ENCODE measurements at regions of chr2 and their contacts with region 1.

Region 1: GRCh38 chr2:109128048-109128465 is 948 bp upstream of the SH3RF3 start:
- DNase-seq: peak; percentile 84 to 85
- ATAC-seq: peak; percentile 83 to 91 (median 88)
- H3K4me3 ChIP-seq: peak overlapping the region; percentile 50 to 80 (median 70)
- H3K27ac ChIP-seq: peak overlapping the region; percentile 41 to 91 (median 78)
- H3K4me1 ChIP-seq: peaks cover 0 to 50% (median 21%) of the 10 kb centered on the region in 9 donors
- H3K27me3 ChIP-seq: peaks cover 0 to 48% (median 0%) of the 10 kb centered on the region in 7 donors
- CTCF ChIP-seq: peak; percentile 78 to 99 (median 95)

Region 2: DNA sequence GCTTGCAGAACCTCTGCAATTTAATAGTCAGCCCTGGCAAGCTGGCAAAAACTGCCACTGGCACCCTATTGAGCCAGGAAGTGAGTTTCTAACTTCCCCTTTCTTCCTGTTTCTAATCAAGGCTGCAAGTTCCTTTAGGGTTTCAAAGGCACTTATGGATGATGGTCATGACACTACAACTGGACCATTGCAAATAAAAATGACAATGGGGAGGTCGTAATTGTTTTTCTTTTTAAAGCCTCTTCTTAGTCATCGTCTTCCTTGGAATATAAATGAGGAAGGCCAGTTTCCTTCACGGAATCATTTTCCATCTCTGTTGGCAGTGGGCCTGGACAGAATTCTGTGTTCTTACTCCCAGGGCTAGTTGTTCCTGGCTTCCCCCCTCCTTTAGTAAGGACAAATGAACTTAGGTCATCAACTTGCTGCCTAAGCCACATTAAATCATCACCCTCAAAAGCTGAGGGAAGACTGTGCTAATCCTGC is 36.7 kb after region 1 on chr2:
- intact Hi-C with region 1: no loop called
- DNase-seq: peak in 1 of 2 donors; percentile 61
- ATAC-seq: peak; percentile 10 to 63 (median 48)
- H3K4me3 ChIP-seq: no peak overlapping the region
- H3K27ac ChIP-seq: peak overlapping the region in 2 of 10 donors; percentile 40 to 60
- H3K4me1 ChIP-seq: peaks cover 0 to 43% (median 24%) of the 10 kb centered on the region in 9 donors
- H3K27me3 ChIP-seq: no peaks in the 10 kb centered on the region
- CTCF ChIP-seq: no peak

Region 3: DNA sequence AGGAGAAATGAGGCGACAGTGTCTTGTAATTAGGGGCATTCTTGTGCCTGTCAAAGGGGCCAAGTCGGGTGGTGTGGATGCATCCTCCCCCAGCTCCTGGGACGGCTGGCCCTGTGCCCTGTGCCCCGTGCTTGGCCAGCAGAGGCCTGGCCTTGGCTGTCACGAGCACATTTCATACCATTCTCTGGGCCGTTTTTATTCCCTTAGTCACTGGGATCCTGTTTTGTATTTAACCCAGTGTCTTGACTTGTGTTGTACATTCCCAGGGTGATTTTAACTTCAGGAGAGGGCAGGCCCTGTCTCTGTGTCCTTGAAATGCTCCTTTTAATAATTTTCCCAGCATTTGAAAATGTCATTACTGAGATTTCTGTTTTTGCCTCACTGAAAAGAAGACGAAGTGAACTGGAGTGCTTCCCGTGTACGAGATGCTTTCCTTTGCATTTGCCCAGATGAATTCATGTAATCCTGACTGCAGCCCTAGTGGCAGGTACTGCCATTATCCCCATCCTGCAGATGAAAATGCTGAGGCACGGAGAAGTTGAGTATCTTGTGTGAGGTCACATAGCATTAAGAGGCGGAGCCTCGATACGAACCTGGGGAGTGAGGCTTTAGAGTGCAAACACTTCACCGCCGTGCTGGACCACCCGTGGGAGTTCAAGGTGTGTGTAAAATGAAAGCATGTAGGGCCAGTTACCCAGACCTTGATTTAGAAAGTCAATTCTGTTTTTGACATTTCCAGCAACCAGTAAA is 57.9 kb after region 1 on chr2:
- intact Hi-C with region 1: loop called in 1 of 10 experiments (anchors 10 kb)
- DNase-seq: peak; percentile 54 to 66
- ATAC-seq: peak; percentile 84 to 95 (median 87)
- H3K4me3 ChIP-seq: peak overlapping the region in 1 of 10 donors; percentile 1
- H3K27ac ChIP-seq: peak overlapping the region; percentile 56 to 90 (median 79)
- H3K4me1 ChIP-seq: peaks cover 9 to 36% (median 27%) of the 10 kb centered on the region in 9 donors
- H3K27me3 ChIP-seq: no peaks in the 10 kb centered on the region
- CTCF ChIP-seq: no peak

Region 4: GRCh38 chr2:109201465-109202327 is 73.6 kb after region 1 on chr2:
- intact Hi-C with region 1: loop called in 5 of 10 experiments (anchors 2 to 10 kb)
- DNase-seq: no peak
- ATAC-seq: peak; percentile 35 to 81 (median 60)
- H3K4me3 ChIP-seq: no peak overlapping the region
- H3K27ac ChIP-seq: peak overlapping the region in 9 of 10 donors; percentile 35 to 79 (median 56)
- H3K4me1 ChIP-seq: peaks cover 0 to 48% (median 21%) of the 10 kb centered on the region in 9 donors
- H3K27me3 ChIP-seq: no peaks in the 10 kb centered on the region
- CTCF ChIP-seq: peak in 3 of 9 donors; percentile 31 to 39 (median 39)

Region 5: DNA sequence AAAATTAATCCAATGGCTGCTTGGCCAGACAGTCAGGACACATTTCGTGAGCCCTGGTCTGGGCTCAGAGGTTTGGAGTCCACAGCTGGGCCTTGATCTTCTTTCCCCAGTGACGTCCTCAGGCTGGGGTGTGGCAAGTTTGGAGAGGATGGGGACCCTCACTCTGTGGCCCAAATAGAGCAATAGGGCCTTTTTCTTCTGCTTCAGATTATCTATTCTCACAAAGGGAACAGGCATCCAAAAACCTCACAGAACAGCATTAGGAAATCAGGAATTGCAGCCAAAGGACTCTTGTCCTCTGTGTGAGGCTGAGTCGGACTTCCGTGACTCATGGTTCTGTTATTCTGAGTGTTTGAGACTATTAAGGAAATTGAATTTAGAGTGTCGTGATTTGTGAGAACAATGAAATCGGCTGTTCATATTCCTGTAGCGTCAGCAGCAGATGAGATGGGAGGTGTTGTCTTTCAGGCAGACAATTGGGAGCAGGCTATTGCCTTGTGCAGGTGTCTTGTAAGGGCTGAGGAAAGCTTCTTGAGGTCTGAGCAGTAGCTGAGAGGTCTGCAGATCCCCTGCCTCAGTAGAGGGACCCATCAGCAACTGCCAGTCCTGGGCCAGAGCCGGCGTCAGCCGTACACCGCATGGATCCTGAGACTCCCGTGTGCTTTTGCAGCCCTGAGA is 114.7 kb after region 1 on chr2:
- intact Hi-C with region 1: loop called in 1 of 10 experiments (anchors 5 kb)
- DNase-seq: no peak
- ATAC-seq: peak; percentile 56 to 82 (median 70)
- H3K4me3 ChIP-seq: no peak overlapping the region
- H3K27ac ChIP-seq: peak overlapping the region; percentile 47 to 89 (median 82)
- H3K4me1 ChIP-seq: peaks cover 27 to 88% (median 66%) of the 10 kb centered on the region in 9 donors
- H3K27me3 ChIP-seq: no peaks in the 10 kb centered on the region
- CTCF ChIP-seq: no peak

Region 6: GRCh38 chr2:109318150-109318948 is 190.3 kb after region 1 on chr2:
- intact Hi-C with region 1: loop called in 1 of 10 experiments (anchors 5 kb)
- DNase-seq: peak; percentile 62 to 85
- ATAC-seq: peak; percentile 53 to 79 (median 64)
- H3K4me3 ChIP-seq: peak overlapping the region in 5 of 10 donors; percentile 2 to 21 (median 17)
- H3K27ac ChIP-seq: peak overlapping the region; percentile 33 to 85 (median 63)
- H3K4me1 ChIP-seq: peaks cover 7 to 68% (median 53%) of the 10 kb centered on the region in 9 donors
- H3K27me3 ChIP-seq: no peaks in the 10 kb centered on the region
- CTCF ChIP-seq: peak in 6 of 9 donors; percentile 4 to 43 (median 25)

Region 7: GRCh38 chr2:109351164-109351756 is 223.2 kb after region 1 on chr2:
- intact Hi-C with region 1: no loop called
- DNase-seq: peak; percentile 53 to 69
- ATAC-seq: peak; percentile 48 to 80 (median 59)
- H3K4me3 ChIP-seq: no peak overlapping the region
- H3K27ac ChIP-seq: peak overlapping the region in 2 of 10 donors; percentile 31 to 32
- H3K4me1 ChIP-seq: peaks cover 17 to 44% (median 37%) of the 10 kb centered on the region in 9 donors
- H3K27me3 ChIP-seq: no peaks in the 10 kb centered on the region
- CTCF ChIP-seq: no peak

Region 8: DNA sequence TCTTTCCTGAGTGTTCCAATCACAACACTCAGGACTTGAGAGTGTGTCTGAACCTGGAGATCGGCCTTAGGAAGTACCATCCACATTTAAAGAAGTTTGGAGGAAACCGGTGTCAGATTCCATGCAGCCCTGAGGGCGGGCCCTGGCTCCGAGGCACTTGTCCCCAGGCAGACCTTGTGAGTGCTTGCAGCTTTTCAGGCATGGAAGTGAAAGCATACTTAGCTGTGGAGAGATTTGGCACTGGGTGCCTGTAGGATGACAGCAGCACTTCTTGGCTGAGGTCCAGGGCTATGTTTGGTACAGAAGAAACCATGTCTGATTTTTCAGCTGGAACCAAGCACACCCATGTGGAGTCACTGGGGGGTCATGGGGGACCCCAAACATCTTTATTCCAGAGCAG is 254.9 kb after region 1 on chr2:
- intact Hi-C with region 1: loop called in 2 of 10 experiments (anchors 5 to 10 kb)
- DNase-seq: peak; percentile 48 to 87
- ATAC-seq: peak; percentile 86 to 96 (median 93)
- H3K4me3 ChIP-seq: no peak overlapping the region
- H3K27ac ChIP-seq: peak overlapping the region in 7 of 10 donors; percentile 4 to 56 (median 41)
- H3K4me1 ChIP-seq: peaks cover 17 to 48% (median 30%) of the 10 kb centered on the region in 9 donors
- H3K27me3 ChIP-seq: no peaks in the 10 kb centered on the region
- CTCF ChIP-seq: no peak

Region 9: DNA sequence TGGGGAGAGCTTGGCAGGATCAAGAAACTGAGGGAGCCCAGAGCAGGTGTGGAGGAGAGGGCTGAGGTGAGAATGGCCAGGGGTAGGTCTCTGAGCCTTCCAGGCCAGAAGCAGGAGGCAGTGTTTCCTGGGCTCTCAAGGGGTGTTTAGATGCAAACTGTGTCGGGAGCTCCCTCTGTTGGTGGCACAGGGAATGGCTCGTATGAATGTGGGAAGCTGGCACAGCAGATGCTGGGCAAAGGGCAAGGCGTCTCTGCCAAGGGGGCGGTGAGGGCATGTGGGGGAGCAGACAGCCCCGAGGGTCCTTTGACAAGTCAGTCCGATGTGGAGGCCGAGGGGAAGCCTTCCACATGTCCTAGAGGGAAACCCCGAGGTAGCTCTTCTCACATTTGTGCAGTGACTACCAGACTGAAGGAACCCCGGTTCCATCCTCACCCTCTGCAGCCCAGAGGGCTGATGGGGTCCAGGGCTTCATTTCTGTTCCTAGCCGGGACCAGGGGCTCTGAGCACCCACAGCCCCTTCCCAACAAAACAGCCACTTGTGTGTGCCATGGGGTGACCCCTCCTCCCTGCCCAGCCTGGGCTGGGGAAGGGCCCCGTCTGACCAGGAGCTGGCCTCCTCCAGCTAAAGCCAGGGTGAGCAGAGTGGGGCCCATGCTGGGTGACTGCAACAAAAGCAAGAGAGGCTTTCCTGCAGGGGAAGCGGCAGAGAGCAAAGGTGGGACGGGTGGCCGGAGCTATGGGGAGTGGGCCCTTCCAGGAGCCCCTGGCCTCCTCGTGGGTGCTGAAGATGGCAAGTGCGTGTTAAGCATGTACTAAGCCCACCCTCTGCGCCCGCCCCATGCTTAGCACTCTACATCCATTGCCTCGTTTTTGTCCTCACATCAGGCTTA is 382.3 kb after region 1 on chr2:
- intact Hi-C with region 1: loop called (anchors 1 to 5 kb)
- DNase-seq: peak; percentile 70 to 81
- ATAC-seq: peak; percentile 46 to 72 (median 56)
- H3K4me3 ChIP-seq: no peak overlapping the region
- H3K27ac ChIP-seq: no peak overlapping the region
- H3K4me1 ChIP-seq: peaks cover 0 to 14% (median 4%) of the 10 kb centered on the region in 9 donors
- H3K27me3 ChIP-seq: no peaks in the 10 kb centered on the region
- CTCF ChIP-seq: peak; percentile 86 to 96 (median 92)

Measured in heart right ventricle (tissue), 16 donors.